PC-9 (cell line): ENCODE measurements at regions of chr2 and their contacts with region 1.

Region 1: GRCh38 chr2:105417857-105418436 is 19.1 kb upstream of the FHL2 start:
- DNase-seq: no peak
- H3K4me3 ChIP-seq: no peak overlapping the region
- H3K27ac ChIP-seq: no peak overlapping the region
- H3K4me1 ChIP-seq: peaks cover 8% of the 10 kb centered on the region
- H3K27me3 ChIP-seq: no peaks in the 10 kb centered on the region
- CTCF ChIP-seq: no peak

Region 2: GRCh38 chr2:105510761-105511610 is 93.0 kb after region 1 on chr2:
- CTCF ChIA-PET with region 1: interaction called, 18 read pairs
- POLR2A ChIA-PET with region 1: no interaction called
- intact Hi-C with region 1: no loop called
- DNase-seq: peak; percentile 11 to 71
- H3K4me3 ChIP-seq: no peak overlapping the region
- H3K27ac ChIP-seq: peak overlapping the region; percentile 64
- H3K4me1 ChIP-seq: peaks cover 26% of the 10 kb centered on the region
- H3K27me3 ChIP-seq: no peaks in the 10 kb centered on the region
- CTCF ChIP-seq: no peak

Region 3: DNA sequence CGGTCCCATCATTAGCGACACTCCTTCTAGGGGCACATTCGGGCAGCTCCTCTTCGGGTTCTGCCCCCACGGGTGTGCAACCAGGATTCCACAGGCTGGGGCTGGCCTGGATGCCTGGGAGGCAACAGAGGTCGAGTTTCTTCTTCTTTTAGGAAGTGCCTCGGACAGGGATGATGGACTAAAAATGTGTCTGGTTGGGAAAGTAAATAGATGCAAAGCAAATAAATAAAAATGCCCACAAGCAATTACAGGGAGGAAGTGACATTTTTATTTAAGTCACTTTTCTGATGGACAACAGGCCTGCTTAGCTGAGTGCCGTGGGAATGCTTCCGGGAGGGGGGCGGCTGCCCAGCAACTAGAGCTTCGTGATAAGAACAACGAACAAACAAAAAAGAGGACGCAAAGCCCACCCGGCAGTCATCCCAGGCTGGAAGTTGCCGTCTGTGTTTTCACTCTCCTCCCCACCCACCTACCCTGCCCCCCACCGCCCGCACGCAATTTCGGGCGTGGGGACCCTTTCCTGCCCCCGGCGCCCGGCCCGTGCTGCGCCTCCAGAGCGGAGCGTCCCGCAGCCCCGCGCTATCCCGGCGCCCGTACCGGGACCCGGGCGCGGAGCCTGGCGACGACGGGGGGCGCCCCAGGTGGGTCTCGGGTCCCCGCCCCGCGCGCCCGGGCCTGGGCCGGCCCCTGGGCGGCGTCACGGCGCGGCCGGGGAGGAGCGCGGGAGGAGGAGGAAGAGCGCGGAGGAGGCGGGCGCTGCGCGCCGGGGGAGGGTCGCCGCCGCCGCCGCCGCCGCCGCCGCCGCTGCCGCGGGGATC is 326.4 kb after region 1 on chr2:
- CTCF ChIA-PET with region 1: no interaction called
- POLR2A ChIA-PET with region 1: interaction called, 15 read pairs
- intact Hi-C with region 1: no loop called
- DNase-seq: peak; percentile 53 to 59
- H3K4me3 ChIP-seq: peak overlapping the region; percentile 56
- H3K27ac ChIP-seq: no peak overlapping the region
- H3K4me1 ChIP-seq: peaks cover 16% of the 10 kb centered on the region
- H3K27me3 ChIP-seq: peaks cover 9% of the 10 kb centered on the region; the same call in 1 of the 2 replicates
- CTCF ChIP-seq: no peak